WTC11 (cell line): ENCODE measurements at regions of chr10 and their contacts with region 1.

Region 1: GRCh38 chr10:88582806-88583583 is at the start of gene RNLS:
- DNase-seq: peak; percentile 74
- ATAC-seq: peak; percentile 94
- H3K4me3 Mint-ChIP-seq: peak within 1 kb of the TSS; percentile 72
- H3K27ac Mint-ChIP-seq: peak within 1 kb of the TSS; percentile 2
- H3K4me1 Mint-ChIP-seq: peaks cover 12% of the 10 kb centered on the region
- H3K27me3 Mint-ChIP-seq: peaks cover 26% of the 10 kb centered on the region
- CTCF ChIP-seq: peak; percentile 79
- total RNA-seq, gene RNLS: 8.7 to 9.2 TPM (median 8.7 TPM) in 3 replicates

Region 2: GRCh38 chr10:88565072-88565471 is 17.9 kb before region 1 on chr10:
- CTCF ChIA-PET with region 1: interaction called, 14 read pairs
- POLR2A ChIA-PET with region 1: no interaction called
- DNase-seq: no peak
- ATAC-seq: peak; percentile 43; the same call in 1 of the 2 replicates
- H3K4me3 Mint-ChIP-seq: no peak overlapping the region
- H3K27ac Mint-ChIP-seq: no peak overlapping the region
- H3K4me1 Mint-ChIP-seq: no peaks in the 10 kb centered on the region
- H3K27me3 Mint-ChIP-seq: no peaks in the 10 kb centered on the region; the same call in 1 of the 2 replicates
- CTCF ChIP-seq: no peak

Region 3: GRCh38 chr10:89235073-89235798 is 652.2 kb after region 1 on chr10:
- CTCF ChIA-PET with region 1: no interaction called
- POLR2A ChIA-PET with region 1: no interaction called
- DNase-seq: no peak
- ATAC-seq: peak; percentile 70
- H3K4me3 Mint-ChIP-seq: no peak overlapping the region
- H3K27ac Mint-ChIP-seq: peak overlapping the region; percentile 13; the same call in 1 of the 2 replicates
- H3K4me1 Mint-ChIP-seq: peaks cover 18% of the 10 kb centered on the region
- H3K27me3 Mint-ChIP-seq: no peaks in the 10 kb centered on the region
- CTCF ChIP-seq: no peak